Activated T-helper 1 cell treated with anti-CD3 and anti-CD28 coated beads, Interleukin-12 subunit alpha, Interleukin-12 subunit beta, Interleukin-2, Interleukin-4 antibody, amounts not matched to agents 30 ng/mL and 10 ng/mL and 1 ng/mL, durations not matched to agents 14 hours and 24 hours and 36 hours (primary cell): ENCODE measurements at regions of chr10 and their contacts with region 1.

Region 1: DNA sequence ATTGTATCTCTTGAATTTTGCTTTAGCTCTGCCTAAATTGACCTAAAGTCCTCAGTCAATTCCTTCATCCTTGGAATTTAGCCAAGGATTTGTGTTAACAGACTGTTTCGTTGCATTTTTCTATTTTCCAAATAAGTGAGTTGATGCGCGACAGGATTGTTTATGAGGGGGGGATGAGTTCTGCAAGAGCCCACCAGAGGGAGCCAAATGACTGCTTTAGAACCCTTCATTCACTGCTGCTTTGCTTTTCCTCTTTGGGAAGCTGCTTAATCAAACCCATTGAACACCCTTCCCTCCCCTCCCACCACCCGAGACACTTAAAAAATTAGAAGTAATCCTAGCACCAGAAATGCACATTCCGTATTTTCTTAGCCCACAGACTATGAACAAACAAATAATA is 33.7 kb upstream of the PTF1A start:
- DNase-seq: no peak
- H3K4me3 Mint-ChIP-seq: no peak overlapping the region
- H3K27ac Mint-ChIP-seq: no peak overlapping the region
- H3K4me1 Mint-ChIP-seq: peaks cover 4% of the 10 kb centered on the region
- H3K27me3 Mint-ChIP-seq: peaks cover 5% of the 10 kb centered on the region

Region 2: DNA sequence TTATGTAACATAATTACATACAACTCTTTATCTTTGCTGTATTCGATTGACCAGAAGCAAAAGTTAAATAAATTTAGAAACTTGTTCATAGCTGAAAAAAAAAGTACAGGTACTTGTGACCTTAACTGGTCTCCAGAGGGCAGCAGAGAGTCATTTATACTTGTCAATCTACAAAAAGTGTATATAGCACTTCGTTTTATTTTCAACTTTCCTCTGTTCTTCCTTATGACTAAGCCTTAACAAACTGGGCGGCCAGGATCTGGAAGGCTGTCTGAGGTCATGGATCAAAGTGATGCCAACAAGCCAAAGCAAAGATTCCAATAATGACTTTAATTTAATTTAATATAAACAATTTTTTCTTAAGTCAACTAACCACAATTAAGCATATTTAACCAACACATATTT is 156.5 kb after region 1 on chr10:
- intact Hi-C with region 1: loop called (anchors 2 kb)
- DNase-seq: peak; percentile 29
- H3K4me3 Mint-ChIP-seq: no peak overlapping the region
- H3K27ac Mint-ChIP-seq: no peak overlapping the region
- H3K4me1 Mint-ChIP-seq: peaks cover 5% of the 10 kb centered on the region
- H3K27me3 Mint-ChIP-seq: no peaks in the 10 kb centered on the region

Region 3: DNA sequence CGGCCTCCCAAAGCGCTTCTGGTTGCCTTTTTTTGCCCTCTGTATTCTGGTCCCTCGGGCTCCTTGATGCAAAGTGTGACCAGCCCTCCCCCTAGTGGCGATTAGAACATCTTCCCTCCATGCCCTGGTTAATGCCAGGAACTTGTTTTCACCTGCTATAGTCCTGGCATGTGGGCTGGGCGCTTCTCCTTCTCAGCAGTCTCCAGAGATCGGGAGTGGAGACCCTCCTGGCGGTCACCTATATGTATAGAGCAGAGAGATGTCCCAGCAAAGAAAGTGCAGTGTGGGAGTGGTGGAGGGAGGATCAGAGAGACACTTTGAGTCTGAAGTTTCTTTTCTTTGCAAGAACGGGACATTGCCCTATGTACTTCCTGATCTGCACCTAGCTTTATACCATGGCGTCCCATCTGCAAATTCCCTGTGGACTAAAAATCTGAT is 544.6 kb after region 1 on chr10:
- intact Hi-C with region 1: loop called (anchors 1 kb)
- DNase-seq: peak; percentile 14
- H3K4me3 Mint-ChIP-seq: no peak overlapping the region
- H3K27ac Mint-ChIP-seq: no peak overlapping the region
- H3K4me1 Mint-ChIP-seq: no peaks in the 10 kb centered on the region
- H3K27me3 Mint-ChIP-seq: peaks cover 14% of the 10 kb centered on the region

Region 4: DNA sequence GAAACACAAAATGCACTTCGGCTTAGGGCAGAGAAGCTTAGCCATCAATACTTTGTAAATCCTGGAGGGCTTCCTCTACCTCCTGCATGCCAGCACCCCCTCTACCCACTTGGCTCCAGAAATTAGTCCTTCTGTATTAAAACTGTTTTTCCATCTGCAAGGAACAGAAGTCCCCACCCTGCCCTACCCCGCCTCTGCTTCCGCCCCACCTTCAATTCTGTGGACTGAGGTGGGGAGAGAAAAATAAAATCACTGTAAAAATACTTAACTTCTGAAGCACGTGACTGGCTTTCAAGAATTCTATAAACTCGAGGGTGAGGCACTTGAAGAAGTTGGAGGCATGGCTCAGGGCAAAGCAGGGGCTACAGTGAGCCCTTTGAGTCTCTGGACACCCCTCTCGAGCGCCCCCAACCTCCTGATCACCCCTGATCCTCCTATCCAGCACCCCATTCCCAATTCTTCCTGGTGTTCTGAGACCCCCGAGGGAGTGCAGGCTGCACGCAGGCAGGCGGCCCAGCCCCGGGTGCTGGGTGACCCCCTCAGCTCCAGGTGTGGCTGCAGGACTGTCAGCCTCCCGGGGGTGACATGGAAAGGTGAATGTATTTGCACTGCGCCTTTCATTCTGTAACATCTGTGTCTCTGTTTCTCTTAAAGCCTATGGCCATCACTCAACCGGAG is 1043.3 kb after region 1 on chr10:
- intact Hi-C with region 1: loop called (anchors 2 kb)
- DNase-seq: no peak
- H3K4me3 Mint-ChIP-seq: no peak overlapping the region
- H3K27ac Mint-ChIP-seq: no peak overlapping the region
- H3K4me1 Mint-ChIP-seq: peaks cover 9% of the 10 kb centered on the region
- H3K27me3 Mint-ChIP-seq: peaks cover 22% of the 10 kb centered on the region

Region 5: DNA sequence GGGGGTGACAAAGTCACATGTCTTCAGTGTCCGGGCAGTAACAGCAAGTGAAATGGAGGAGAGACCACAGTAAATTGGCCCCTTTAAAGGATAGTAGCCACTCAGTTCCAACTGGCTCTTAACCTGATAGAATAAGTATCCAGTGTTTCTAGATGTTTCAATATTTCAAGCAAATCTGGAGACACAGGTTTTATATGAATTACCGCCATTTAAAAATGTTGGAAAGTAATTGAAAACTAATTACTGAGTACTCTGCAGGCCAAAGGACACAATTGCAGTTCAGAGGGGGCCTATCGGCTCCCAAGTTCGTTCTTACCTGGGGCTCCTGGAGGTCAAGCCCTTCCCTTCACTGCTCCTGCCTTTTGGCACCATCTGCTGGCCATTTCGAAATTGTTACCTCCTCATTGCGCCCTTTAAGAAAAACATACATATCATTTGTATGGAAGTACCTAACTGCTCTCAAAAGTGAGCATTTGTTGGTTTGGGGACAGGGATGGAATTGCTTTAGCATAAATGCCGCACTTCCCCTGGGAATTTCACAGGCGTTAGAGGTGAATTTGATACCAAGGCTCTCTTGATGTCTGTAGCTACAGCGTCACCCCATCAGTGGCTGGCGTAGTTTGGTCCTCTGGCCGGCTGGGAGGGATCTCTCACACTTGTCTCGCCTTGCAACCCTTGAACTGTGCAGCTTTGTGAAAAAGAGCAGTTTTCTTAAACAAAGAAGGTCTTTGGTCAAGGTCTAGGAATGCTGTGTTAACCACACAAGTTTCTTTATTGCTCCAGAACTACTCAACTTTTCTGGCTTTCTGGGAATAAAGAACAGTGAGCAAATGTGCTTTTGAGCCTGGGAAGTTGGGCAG is 1345.3 kb after region 1 on chr10:
- intact Hi-C with region 1: loop called (anchors 5 kb)
- DNase-seq: no peak
- H3K4me3 Mint-ChIP-seq: no peak overlapping the region
- H3K27ac Mint-ChIP-seq: no peak overlapping the region
- H3K4me1 Mint-ChIP-seq: peaks cover 9% of the 10 kb centered on the region
- H3K27me3 Mint-ChIP-seq: peaks cover 2% of the 10 kb centered on the region